ENCODE measurements at regions of chr19 and their contacts with region 1.

Region 1: DNA sequence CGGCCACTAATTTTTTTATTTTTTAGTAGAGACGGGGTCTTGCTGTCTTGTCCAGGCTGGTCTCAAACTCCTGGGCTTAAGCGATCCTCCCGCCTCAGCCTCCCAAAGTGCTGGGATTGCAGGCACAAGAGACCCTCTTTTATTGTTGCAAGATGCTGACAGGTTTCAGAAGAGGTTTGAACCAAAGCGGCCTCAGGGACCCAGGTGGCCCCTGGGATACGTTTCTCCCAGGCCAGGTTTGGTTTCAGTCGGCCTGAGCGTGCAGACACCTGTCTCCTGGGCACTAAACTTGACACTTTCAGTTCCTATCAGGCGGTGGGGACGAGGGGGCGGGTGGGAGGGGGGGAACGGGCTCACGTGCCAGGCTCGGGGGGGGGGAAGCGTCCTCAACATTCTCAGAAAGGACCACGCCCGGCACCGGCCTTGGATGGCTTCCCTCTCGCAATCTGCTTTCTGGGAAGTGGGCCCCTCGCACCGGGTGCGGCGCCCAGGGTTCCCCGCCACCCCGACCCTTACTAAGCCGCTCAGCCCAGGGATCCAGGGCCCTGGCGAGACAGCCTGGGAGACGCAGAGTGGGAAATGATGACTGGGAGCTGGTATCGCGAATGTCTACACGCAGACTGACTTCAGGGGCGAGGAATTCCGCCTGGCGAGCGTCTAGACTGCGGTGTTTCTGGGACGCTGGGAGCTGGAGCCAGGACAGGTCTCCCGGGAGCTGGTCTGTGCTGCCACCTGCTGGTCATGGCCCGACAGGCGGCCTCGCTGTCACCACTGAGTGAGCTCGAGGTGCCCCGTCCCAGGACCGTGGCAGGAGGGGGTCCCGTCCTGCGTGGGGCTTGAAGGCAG is 91.6 kb downstream of the GNG7 start:
- DNase-seq: peak; percentile 93
- H3K4me3 ChIP-seq: peak overlapping the region; percentile 60
- H3K27ac ChIP-seq: peak overlapping the region; percentile 85
- H3K4me1 ChIP-seq: peaks cover 73% of the 10 kb centered on the region
- CTCF ChIP-seq: peak; percentile 98

Region 2: GRCh38 chr19:2168619-2169424 is 442.0 kb before region 1 on chr19:
- CTCF ChIA-PET with region 1: no interaction called
- POLR2A ChIA-PET with region 1: no interaction called
- intact Hi-C with region 1: loop called (anchors 10 kb)
- DNase-seq: no peak
- H3K4me3 ChIP-seq: no peak overlapping the region
- H3K27ac ChIP-seq: no peak overlapping the region
- H3K4me1 ChIP-seq: peaks cover 63% of the 10 kb centered on the region
- CTCF ChIP-seq: no peak

Region 3: DNA sequence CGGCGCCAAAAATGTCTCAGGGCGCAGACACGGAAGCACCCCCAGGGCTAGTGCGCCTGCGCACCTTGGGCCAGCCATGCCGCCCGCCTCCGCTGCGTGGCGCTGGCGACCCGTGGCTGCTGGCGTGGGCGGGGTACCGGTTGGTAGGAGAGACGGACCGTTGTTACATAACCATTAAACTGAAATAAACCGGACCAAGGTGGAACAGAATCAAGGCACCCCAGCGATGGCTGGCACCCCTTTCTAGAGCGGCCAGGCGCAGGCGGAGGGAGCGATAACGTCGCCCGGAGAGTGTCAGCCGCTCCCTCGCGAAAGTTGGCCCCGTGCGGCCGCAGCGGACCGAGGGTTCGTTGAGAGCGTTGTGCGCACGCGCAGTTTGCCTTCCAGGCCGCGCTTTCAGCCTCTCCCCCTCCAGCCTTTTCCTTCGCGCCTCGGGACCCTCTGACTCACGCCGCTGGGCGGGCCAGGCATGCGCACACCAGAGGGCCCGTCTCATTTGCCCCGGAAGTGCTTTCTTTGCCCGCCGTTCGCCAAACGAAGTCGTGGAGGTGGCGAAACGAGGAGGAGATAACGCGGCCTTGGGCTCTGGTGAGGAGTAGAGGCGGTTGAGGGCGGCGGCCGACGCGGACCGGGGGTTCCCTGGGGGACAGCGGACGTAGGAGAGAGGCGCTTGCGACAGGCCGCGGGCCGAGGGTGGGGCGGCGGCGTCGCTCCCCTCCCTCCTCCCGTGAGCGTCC is 374.4 kb before region 1 on chr19 and contains the starts of genes PLEKHJ1 and SF3A2:
- CTCF ChIA-PET with region 1: no interaction called
- POLR2A ChIA-PET with region 1: no interaction called
- intact Hi-C with region 1: loop called (anchors 5 kb)
- DNase-seq: peak; percentile 99
- H3K4me3 ChIP-seq: peak within 1 kb of the TSS; percentile 96
- H3K27ac ChIP-seq: peak within 1 kb of the TSS; percentile 75
- H3K4me1 ChIP-seq: peaks cover 68% of the 10 kb centered on the region
- CTCF ChIP-seq: peak; percentile 97
- total RNA-seq, gene PLEKHJ1: 205 and 221 TPM in 2 replicates
- total RNA-seq, gene SF3A2: 104 and 124 TPM in 2 replicates

Region 4: GRCh38 chr19:2561895-2562294 is 49.0 kb before region 1 on chr19:
- CTCF ChIA-PET with region 1: no interaction called
- POLR2A ChIA-PET with region 1: no interaction called
- intact Hi-C with region 1: loop called (anchors 1 kb)
- DNase-seq: peak; percentile 82
- H3K4me3 ChIP-seq: peak overlapping the region; percentile 61
- H3K27ac ChIP-seq: peak overlapping the region; percentile 47
- H3K4me1 ChIP-seq: peaks cover 25% of the 10 kb centered on the region
- CTCF ChIP-seq: no peak

Region 5: GRCh38 chr19:2636897-2637683 is 26.2 kb after region 1 on chr19:
- CTCF ChIA-PET with region 1: interaction called, 6 read pairs
- POLR2A ChIA-PET with region 1: interaction called, 5 read pairs
- intact Hi-C with region 1: loop called (anchors 1 kb)
- DNase-seq: peak; percentile 68
- H3K4me3 ChIP-seq: no peak overlapping the region
- H3K27ac ChIP-seq: peak overlapping the region; percentile 3
- H3K4me1 ChIP-seq: peaks cover 41% of the 10 kb centered on the region
- CTCF ChIP-seq: peak; percentile 88

Region 6: GRCh38 chr19:2663920-2664571 is 53.2 kb after region 1 on chr19:
- CTCF ChIA-PET with region 1: no interaction called
- POLR2A ChIA-PET with region 1: no interaction called
- intact Hi-C with region 1: no loop called
- DNase-seq: peak; percentile 75
- H3K4me3 ChIP-seq: no peak overlapping the region
- H3K27ac ChIP-seq: peak overlapping the region; percentile 31
- H3K4me1 ChIP-seq: peaks cover 34% of the 10 kb centered on the region
- CTCF ChIP-seq: peak; percentile 72